Aorta (tissue), 5 donors: ENCODE measurements at regions of chr13 and their contacts with region 1.

Region 1: GRCh38 chr13:31742097-31742734 is 2.9 kb downstream of the RXFP2 start:
- DNase-seq: peak; percentile 65 to 77
- ATAC-seq: peak; percentile 84
- H3K4me3 ChIP-seq: no peak overlapping the region
- H3K27ac ChIP-seq: no peak overlapping the region
- H3K4me1 ChIP-seq: no peaks in the 10 kb centered on the region
- H3K27me3 ChIP-seq: no peaks in the 10 kb centered on the region

Region 2: GRCh38 chr13:31431722-31432137 is 310.5 kb before region 1 on chr13:
- intact Hi-C with region 1: loop called (anchors 5 kb)
- DNase-seq: peak in 1 of 2 donors; percentile 56
- ATAC-seq: no peak
- H3K4me3 ChIP-seq: no peak overlapping the region
- H3K27ac ChIP-seq: no peak overlapping the region
- H3K4me1 ChIP-seq: no peaks in the 10 kb centered on the region
- H3K27me3 ChIP-seq: no peaks in the 10 kb centered on the region

Region 3: GRCh38 chr13:31538067-31539042 is 203.9 kb before region 1 on chr13:
- intact Hi-C with region 1: loop called (anchors 5 kb)
- DNase-seq: no peak
- ATAC-seq: no peak
- H3K4me3 ChIP-seq: no peak overlapping the region
- H3K27ac ChIP-seq: no peak overlapping the region
- H3K4me1 ChIP-seq: no peaks in the 10 kb centered on the region
- H3K27me3 ChIP-seq: no peaks in the 10 kb centered on the region